T-cell (primary cell): ENCODE measurements at regions of chr10 and their contacts with region 1.

Region 1: GRCh38 chr10:77641788-77642397 is 4.3 kb upstream of the KCNMA1 start:
- DNase-seq: peak in 27 of 35 experiments; percentile 5 to 72 (median 31)
- ATAC-seq: no peak
- H3K4me3 ChIP-seq: no peak overlapping the region
- H3K4me3 Mint-ChIP-seq: no peak overlapping the region
- H3K27ac ChIP-seq: no peak overlapping the region
- H3K27ac Mint-ChIP-seq: no peak overlapping the region
- H3K4me1 ChIP-seq: no peaks in the 10 kb centered on the region
- H3K4me1 Mint-ChIP-seq: peaks cover 0 to 10% (median 9%) of the 10 kb centered on the region in 3 donors
- H3K27me3 ChIP-seq: peaks cover 6 to 30% of the 10 kb centered on the region in 2 experiments
- H3K27me3 Mint-ChIP-seq: peaks cover 34 to 46% of the 10 kb centered on the region in 2 donors

Region 2: DNA sequence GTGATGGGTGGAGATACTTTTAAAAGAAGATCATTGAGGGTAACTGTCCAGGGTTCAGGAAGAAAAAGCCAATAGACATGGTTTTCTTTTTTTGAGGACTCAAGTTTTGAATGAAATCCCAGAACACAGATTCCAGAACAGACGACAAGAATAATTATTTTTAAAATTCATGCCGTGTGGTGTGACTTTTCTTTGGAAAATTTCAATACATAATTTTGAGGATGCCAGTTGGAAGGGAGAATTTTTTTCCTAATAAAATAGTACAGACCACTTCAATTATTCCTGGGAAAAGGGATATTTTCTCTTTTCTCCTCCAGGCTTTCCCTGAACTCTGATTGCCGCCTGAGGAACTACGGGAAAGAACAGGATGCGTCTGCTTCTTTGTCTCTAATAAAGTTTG is 955.7 kb before region 1 on chr10:
- CTCF ChIA-PET with region 1: no interaction called
- POLR2A ChIA-PET with region 1: no interaction called
- DNase-seq: no peak
- ATAC-seq: no peak
- H3K4me3 ChIP-seq: no peak overlapping the region
- H3K4me3 Mint-ChIP-seq: no peak overlapping the region
- H3K27ac ChIP-seq: no peak overlapping the region
- H3K27ac Mint-ChIP-seq: no peak overlapping the region
- H3K4me1 ChIP-seq: no peaks in the 10 kb centered on the region
- H3K4me1 Mint-ChIP-seq: no peaks in the 10 kb centered on the region
- H3K27me3 ChIP-seq: no peaks in the 10 kb centered on the region
- H3K27me3 Mint-ChIP-seq: no peaks in the 10 kb centered on the region

Region 3: DNA sequence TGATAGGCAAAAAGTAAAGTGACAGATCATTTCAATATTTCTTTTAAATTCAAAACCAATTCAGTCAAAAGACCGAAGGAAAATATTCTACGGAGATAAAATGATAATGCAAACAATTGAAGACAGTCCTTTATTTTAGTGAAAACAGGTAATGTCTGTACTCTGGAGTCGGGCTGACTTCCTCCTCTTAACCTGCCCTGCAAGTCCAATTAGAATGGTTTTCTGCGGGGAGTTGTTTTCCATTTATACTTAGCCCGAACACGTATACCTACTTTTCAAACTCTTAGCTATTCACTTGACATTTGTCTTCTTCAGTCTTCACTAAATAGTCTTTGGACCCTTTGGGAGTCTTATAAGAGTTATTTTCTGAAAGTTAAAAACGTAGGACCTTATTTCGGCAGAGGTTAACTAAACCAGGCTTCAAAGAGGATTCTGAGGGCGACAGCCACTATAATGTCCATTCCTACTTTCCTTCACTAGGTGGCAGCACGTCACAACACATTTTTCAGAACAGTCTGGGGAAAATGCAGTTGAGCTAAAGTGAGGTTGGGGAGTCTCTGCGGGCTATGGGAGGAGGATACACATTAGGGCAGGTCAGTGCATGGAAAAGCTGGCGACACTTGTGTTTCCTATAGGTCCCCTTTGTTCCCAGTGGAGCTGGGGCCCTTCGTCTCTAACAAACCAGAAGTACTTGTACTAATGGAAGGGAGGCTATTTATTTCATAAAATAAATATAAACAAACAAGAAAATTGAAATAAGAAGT is 476.3 kb before region 1 on chr10:
- CTCF ChIA-PET with region 1: interaction called, 16 to 18 read pairs
- POLR2A ChIA-PET with region 1: no interaction called
- DNase-seq: peak in 21 of 35 experiments; percentile 0 to 60 (median 15)
- ATAC-seq: peak in 3 of 4 experiments; percentile 49 to 64 (median 51)
- H3K4me3 ChIP-seq: no peak overlapping the region
- H3K4me3 Mint-ChIP-seq: peak overlapping the region in 2 of 3 donors; percentile 29 to 35
- H3K27ac ChIP-seq: no peak overlapping the region
- H3K27ac Mint-ChIP-seq: no peak overlapping the region
- H3K4me1 ChIP-seq: no peaks in the 10 kb centered on the region
- H3K4me1 Mint-ChIP-seq: peaks cover 4 to 6% (median 5%) of the 10 kb centered on the region in 3 donors
- H3K27me3 ChIP-seq: peaks cover 3% of the 10 kb centered on the region in 2 experiments
- H3K27me3 Mint-ChIP-seq: peaks cover 21 to 32% of the 10 kb centered on the region in 2 donors

Region 4: GRCh38 chr10:77653210-77653609 is 11.3 kb after region 1 on chr10:
- CTCF ChIA-PET with region 1: no interaction called
- POLR2A ChIA-PET with region 1: no interaction called
- DNase-seq: no peak
- ATAC-seq: no peak
- H3K4me3 ChIP-seq: no peak overlapping the region
- H3K4me3 Mint-ChIP-seq: no peak overlapping the region
- H3K27ac ChIP-seq: no peak overlapping the region
- H3K27ac Mint-ChIP-seq: no peak overlapping the region
- H3K4me1 ChIP-seq: no peaks in the 10 kb centered on the region
- H3K4me1 Mint-ChIP-seq: no peaks in the 10 kb centered on the region
- H3K27me3 ChIP-seq: peaks cover 0 to 12% of the 10 kb centered on the region in 2 experiments
- H3K27me3 Mint-ChIP-seq: peaks cover 18 to 25% of the 10 kb centered on the region in 2 donors